Activated CD4-positive, alpha-beta memory T cell treated with anti-CD3 and anti-CD28 coated beads for 36 hours (primary cell): ENCODE measurements at regions of chr19 and their contacts with region 1.

Region 1: DNA sequence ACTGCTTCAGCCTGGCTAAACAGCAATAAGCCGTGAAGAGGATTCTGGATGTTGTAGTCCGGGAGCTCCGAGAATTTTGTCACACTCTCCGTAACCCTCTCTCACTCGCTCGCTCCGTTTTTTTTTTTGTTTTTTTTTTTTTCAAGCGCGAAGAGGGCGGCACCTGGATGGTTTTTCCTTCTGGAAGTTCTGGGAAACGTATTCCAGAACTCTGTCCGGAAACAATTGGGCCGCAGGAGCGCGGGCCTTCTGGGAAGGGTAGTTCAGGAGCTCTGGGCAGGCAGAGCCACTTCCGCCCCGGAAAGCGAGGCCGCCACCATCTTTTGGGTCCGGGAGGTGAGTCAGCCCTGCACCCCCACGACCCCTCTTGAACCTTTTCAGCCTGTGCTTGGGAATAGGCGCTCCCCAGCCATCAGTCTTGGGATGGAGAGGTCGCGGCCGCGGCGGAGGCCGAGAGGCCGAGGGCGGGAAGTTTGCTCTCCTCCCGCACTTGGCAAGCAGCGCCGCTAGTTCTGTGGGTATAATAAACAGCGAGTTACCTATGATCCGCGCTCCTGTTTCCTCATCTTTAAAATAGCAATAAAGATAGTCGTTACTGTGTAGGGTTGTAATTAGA is at the start of gene ZNF227:
- DNase-seq: peak; percentile 89
- H3K4me3 Mint-ChIP-seq: peak within 1 kb of the TSS; percentile 91
- H3K27ac Mint-ChIP-seq: peak within 1 kb of the TSS; percentile 88
- H3K4me1 Mint-ChIP-seq: peaks cover 23% of the 10 kb centered on the region
- H3K27me3 Mint-ChIP-seq: no peaks in the 10 kb centered on the region
- total RNA-seq, gene ZNF227: 13.5 TPM

Region 2: GRCh38 chr19:44141191-44142058 is 70.9 kb before region 1 on chr19 and contains the start of gene ZNF234:
- CTCF ChIA-PET with region 1: no interaction called
- POLR2A ChIA-PET with region 1: no interaction called
- intact Hi-C with region 1: loop called (anchors 2 kb)
- DNase-seq: peak; percentile 78
- H3K4me3 Mint-ChIP-seq: peak within 1 kb of the TSS; percentile 91
- H3K27ac Mint-ChIP-seq: peak within 1 kb of the TSS; percentile 83
- H3K4me1 Mint-ChIP-seq: peaks cover 15% of the 10 kb centered on the region
- H3K27me3 Mint-ChIP-seq: no peaks in the 10 kb centered on the region
- total RNA-seq, gene ZNF234: 7.3 to 8.7 TPM

Region 3: DNA sequence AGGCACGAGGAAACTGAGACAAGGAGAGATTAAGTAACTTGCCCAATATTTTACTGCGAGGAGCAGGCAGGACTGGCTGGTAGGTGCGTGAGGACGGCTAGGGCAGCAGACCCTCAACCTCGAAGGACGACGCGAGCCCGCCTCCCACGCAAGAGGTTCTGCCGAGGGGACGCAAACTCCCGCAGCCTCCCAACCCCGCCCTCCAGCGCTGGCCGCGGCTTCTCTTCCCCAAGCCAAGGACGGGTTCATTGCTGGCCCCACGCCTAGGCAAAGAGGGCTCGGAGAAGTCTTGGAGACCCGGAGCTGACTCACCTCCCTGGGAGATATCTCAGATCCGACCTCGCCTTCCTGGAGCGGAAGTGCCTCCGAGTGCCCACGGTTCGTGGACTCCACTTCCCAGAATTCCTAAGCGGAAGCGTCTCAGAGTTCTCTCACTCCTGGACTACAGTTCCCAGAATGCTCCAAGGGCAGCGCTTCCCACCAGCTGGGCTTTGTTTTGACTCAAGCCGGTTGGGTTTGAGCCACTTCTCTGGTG is 92.4 kb after region 1 on chr19 and contains the start of gene ZNF235:
- CTCF ChIA-PET with region 1: no interaction called
- POLR2A ChIA-PET with region 1: interaction called, 5 read pairs
- intact Hi-C with region 1: loop called (anchors 1 kb)
- DNase-seq: peak; percentile 87
- H3K4me3 Mint-ChIP-seq: peak within 1 kb of the TSS; percentile 83
- H3K27ac Mint-ChIP-seq: peak within 1 kb of the TSS; percentile 18
- H3K4me1 Mint-ChIP-seq: peaks cover 15% of the 10 kb centered on the region
- H3K27me3 Mint-ChIP-seq: no peaks in the 10 kb centered on the region
- total RNA-seq, gene ZNF235: 1.2 to 1.3 TPM

Region 4: DNA sequence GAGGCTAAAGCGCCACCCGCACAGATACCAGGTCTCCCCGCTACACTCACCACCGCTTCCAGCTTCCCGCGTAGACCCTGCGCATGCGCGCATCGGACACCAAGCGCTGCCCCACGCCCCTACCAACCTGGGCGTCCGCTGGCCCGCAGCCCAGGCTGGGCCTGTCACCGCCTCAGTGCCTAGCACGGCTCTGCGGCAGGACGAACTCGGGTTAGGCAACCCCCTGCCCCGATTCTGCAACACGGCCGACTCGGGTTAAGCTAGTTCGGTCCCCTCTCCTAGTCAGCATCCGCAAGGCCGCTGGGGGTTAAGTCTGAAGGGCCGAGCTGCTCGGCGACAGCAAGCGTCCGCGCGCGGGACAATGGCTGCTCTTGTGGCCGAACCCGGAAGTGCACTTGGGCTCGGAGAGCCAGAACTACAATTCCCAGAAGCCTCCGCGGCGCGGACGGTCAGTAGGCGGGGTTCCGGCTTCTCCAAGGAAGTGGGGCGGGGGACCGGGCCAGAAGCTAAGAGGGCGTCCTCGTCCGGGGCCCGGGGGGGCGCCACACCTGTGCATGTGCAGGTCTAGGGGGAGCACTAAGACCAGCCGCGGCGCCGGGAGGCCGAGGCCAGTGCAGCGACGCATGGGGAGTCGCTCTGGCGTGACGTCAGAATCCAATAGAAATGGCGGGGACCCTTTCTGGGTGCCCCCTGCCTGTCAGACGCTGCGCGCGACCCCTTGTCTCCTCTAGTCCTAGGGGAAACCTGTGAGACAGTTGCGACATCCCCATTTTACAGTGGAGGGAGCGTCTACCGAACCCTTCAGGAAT is 288.0 kb after region 1 on chr19 and contains the start of gene ZNF180:
- CTCF ChIA-PET with region 1: no interaction called
- POLR2A ChIA-PET with region 1: no interaction called
- intact Hi-C with region 1: loop called (anchors 5 kb)
- DNase-seq: peak; percentile 96
- H3K4me3 Mint-ChIP-seq: peak within 1 kb of the TSS; percentile 87
- H3K27ac Mint-ChIP-seq: peak within 1 kb of the TSS; percentile 90
- H3K4me1 Mint-ChIP-seq: peaks cover 23% of the 10 kb centered on the region
- H3K27me3 Mint-ChIP-seq: peaks cover 6% of the 10 kb centered on the region
- total RNA-seq, gene ZNF180: 4.3 to 5.4 TPM